Activated B cell treated with CpG ODN at 0.5 μM for 24 hours (primary cell): ENCODE measurements at regions of chr10 and their contacts with region 1.

Region 1: DNA sequence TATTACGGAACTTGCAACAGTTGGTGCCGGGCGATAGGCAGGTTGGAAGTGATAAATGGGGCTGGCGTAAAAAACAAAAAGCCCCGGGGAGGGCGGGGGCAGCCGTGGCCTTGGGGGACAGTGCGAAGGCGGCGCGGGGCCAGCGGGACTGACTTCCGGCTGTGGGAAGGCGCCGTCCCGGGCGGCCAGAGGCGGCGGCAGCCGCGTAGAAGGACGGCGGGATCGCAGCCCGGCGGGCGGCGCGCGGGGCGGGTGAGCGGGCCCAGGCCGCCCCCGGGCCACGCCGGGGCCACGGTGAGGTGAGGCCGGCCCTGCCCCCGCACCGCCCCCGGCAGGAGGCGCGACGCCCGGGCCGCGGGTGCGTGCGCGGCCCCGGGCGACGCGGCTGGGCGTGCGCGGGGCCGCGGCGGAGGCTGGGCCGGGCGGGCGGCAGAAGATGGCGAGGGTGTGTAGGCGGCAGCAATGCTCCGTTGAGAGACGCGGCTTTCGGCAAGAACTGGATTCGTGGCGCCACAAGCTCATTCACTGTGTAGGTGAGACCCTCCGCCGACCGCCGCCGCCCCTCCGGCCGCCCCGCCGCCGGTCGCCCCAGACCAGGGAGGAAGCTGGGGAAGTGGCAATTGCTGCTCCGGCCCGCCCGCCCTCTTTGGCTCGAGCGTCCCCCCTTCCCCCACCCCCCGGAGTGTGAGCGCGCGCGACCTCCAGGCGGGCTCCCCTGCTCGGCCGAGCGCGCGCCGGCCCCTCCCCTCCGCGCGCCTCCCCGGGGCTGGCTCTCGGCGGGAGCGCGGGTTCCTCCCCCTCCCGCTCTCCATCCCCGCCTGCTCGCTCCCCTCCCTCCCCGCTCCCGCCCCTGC is at the start of gene LCOR:
- DNase-seq: peak; percentile 87
- ATAC-seq: peak; percentile 71
- H3K4me3 Mint-ChIP-seq: peak within 1 kb of the TSS; percentile 87
- H3K27ac Mint-ChIP-seq: peak within 1 kb of the TSS; percentile 94
- H3K4me1 Mint-ChIP-seq: peaks cover 58% of the 10 kb centered on the region
- H3K27me3 Mint-ChIP-seq: no peaks in the 10 kb centered on the region
- CTCF ChIP-seq: no peak
- total RNA-seq, gene LCOR: 42.8 and 54.9 TPM in 2 replicates

Region 2: GRCh38 chr10:96586419-96587263 is 245.5 kb before region 1 on chr10 and contains the start of gene TM9SF3:
- CTCF ChIA-PET with region 1: no interaction called
- POLR2A ChIA-PET with region 1: no interaction called
- intact Hi-C with region 1: loop called (anchors 2 kb)
- DNase-seq: peak; percentile 84
- ATAC-seq: peak; percentile 82
- H3K4me3 Mint-ChIP-seq: peak within 1 kb of the TSS; percentile 87
- H3K27ac Mint-ChIP-seq: peak within 1 kb of the TSS; percentile 71
- H3K4me1 Mint-ChIP-seq: peaks cover 36% of the 10 kb centered on the region
- H3K27me3 Mint-ChIP-seq: no peaks in the 10 kb centered on the region
- CTCF ChIP-seq: no peak
- total RNA-seq, gene TM9SF3: 61.7 and 62.7 TPM in 2 replicates

Region 3: GRCh38 chr10:96700374-96701099 is 131.6 kb before region 1 on chr10:
- CTCF ChIA-PET with region 1: no interaction called
- POLR2A ChIA-PET with region 1: interaction called, 6 read pairs
- intact Hi-C with region 1: loop called (anchors 2 kb)
- DNase-seq: peak; percentile 70
- ATAC-seq: peak; percentile 90
- H3K4me3 Mint-ChIP-seq: peak overlapping the region; percentile 94
- H3K27ac Mint-ChIP-seq: peak overlapping the region; percentile 97
- H3K4me1 Mint-ChIP-seq: peaks cover 89% of the 10 kb centered on the region
- H3K27me3 Mint-ChIP-seq: no peaks in the 10 kb centered on the region
- CTCF ChIP-seq: no peak

Region 4: GRCh38 chr10:96765406-96766240 is 66.5 kb before region 1 on chr10:
- CTCF ChIA-PET with region 1: interaction called, 5 read pairs
- POLR2A ChIA-PET with region 1: no interaction called
- intact Hi-C with region 1: loop called (anchors 1 kb)
- DNase-seq: peak; percentile 64
- ATAC-seq: peak; percentile 73
- H3K4me3 Mint-ChIP-seq: peak overlapping the region; percentile 53
- H3K27ac Mint-ChIP-seq: peak overlapping the region; percentile 83
- H3K4me1 Mint-ChIP-seq: peaks cover 39% of the 10 kb centered on the region
- H3K27me3 Mint-ChIP-seq: no peaks in the 10 kb centered on the region
- CTCF ChIP-seq: peak; percentile 68

Region 5: GRCh38 chr10:96863922-96864543 is 31.9 kb after region 1 on chr10:
- CTCF ChIA-PET with region 1: no interaction called
- POLR2A ChIA-PET with region 1: interaction called, 5 read pairs
- intact Hi-C with region 1: loop called (anchors 2 kb)
- DNase-seq: no peak
- ATAC-seq: peak; percentile 76
- H3K4me3 Mint-ChIP-seq: peak overlapping the region; percentile 5
- H3K27ac Mint-ChIP-seq: peak overlapping the region; percentile 71
- H3K4me1 Mint-ChIP-seq: peaks cover 52% of the 10 kb centered on the region
- H3K27me3 Mint-ChIP-seq: no peaks in the 10 kb centered on the region
- CTCF ChIP-seq: no peak

Region 6: GRCh38 chr10:96919785-96920430 is 87.8 kb after region 1 on chr10:
- CTCF ChIA-PET with region 1: no interaction called
- POLR2A ChIA-PET with region 1: no interaction called
- intact Hi-C with region 1: no loop called
- DNase-seq: no peak
- ATAC-seq: peak; percentile 72
- H3K4me3 Mint-ChIP-seq: peak overlapping the region; percentile 30
- H3K27ac Mint-ChIP-seq: peak overlapping the region; percentile 72
- H3K4me1 Mint-ChIP-seq: peaks cover 41% of the 10 kb centered on the region
- H3K27me3 Mint-ChIP-seq: no peaks in the 10 kb centered on the region
- CTCF ChIP-seq: no peak

Region 7: GRCh38 chr10:97025613-97026242 is 193.6 kb after region 1 on chr10:
- CTCF ChIA-PET with region 1: interaction called, 3 read pairs
- POLR2A ChIA-PET with region 1: no interaction called
- intact Hi-C with region 1: loop called (anchors 2 kb)
- DNase-seq: no peak
- ATAC-seq: peak; percentile 71
- H3K4me3 Mint-ChIP-seq: no peak overlapping the region
- H3K27ac Mint-ChIP-seq: no peak overlapping the region
- H3K4me1 Mint-ChIP-seq: peaks cover 15% of the 10 kb centered on the region
- H3K27me3 Mint-ChIP-seq: peaks cover 3% of the 10 kb centered on the region
- CTCF ChIP-seq: peak; percentile 7